ENCODE measurements at regions of chr7 and their contacts with region 1.

Region 1: GRCh38 chr7:148914208-148914777 is 30.2 kb upstream of the EZH2 start:
- DNase-seq: peak; percentile 81
- H3K4me3 Mint-ChIP-seq: peak overlapping the region; percentile 84
- H3K27ac Mint-ChIP-seq: peak overlapping the region; percentile 98
- H3K4me1 Mint-ChIP-seq: peaks cover 62% of the 10 kb centered on the region
- H3K27me3 Mint-ChIP-seq: peaks cover 1% of the 10 kb centered on the region

Region 2: DNA sequence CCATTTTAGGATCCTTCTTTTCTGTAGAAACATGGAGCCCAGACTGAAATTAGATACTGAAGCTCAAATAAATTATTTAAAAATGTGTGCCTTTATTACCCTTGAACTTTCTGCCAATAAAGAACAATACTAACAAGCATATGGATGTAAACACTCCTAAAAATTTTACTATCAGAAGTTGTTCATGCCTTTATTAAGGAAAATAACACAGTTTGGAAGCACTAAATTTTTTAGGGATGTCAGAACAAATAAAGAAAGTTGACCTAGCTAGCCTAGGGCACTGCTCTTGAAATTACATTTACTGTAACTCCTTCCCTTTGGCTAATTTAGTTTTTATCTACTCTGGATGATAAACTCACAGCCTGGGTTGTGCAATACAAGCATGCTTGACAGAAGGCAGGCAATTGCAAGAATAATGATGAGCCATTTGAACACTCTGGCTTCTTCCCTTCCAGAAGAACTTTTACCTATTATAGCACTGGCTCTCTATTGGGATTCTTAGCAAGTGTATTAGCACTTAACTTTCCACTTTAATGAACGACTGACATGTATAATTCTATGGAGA is 675.5 kb before region 1 on chr7:
- intact Hi-C with region 1: no loop called
- DNase-seq: no peak
- H3K4me3 Mint-ChIP-seq: no peak overlapping the region
- H3K27ac Mint-ChIP-seq: no peak overlapping the region
- H3K4me1 Mint-ChIP-seq: no peaks in the 10 kb centered on the region
- H3K27me3 Mint-ChIP-seq: peaks cover 20% of the 10 kb centered on the region

Region 3: GRCh38 chr7:148800677-148801076 is 113.6 kb before region 1 on chr7:
- intact Hi-C with region 1: no loop called
- DNase-seq: peak; percentile 48
- H3K4me3 Mint-ChIP-seq: no peak overlapping the region
- H3K27ac Mint-ChIP-seq: peak overlapping the region; percentile 1
- H3K4me1 Mint-ChIP-seq: no peaks in the 10 kb centered on the region
- H3K27me3 Mint-ChIP-seq: no peaks in the 10 kb centered on the region

Region 4: GRCh38 chr7:148856891-148857290 is 57.4 kb before region 1 on chr7:
- intact Hi-C with region 1: loop called (anchors 1 kb)
- DNase-seq: no peak
- H3K4me3 Mint-ChIP-seq: peak overlapping the region; percentile 32
- H3K27ac Mint-ChIP-seq: peak overlapping the region; percentile 79
- H3K4me1 Mint-ChIP-seq: peaks cover 40% of the 10 kb centered on the region
- H3K27me3 Mint-ChIP-seq: no peaks in the 10 kb centered on the region

Region 5: GRCh38 chr7:148898845-148899484 is 15.3 kb before region 1 on chr7:
- intact Hi-C with region 1: loop called (anchors 2 kb)
- DNase-seq: peak; percentile 46
- H3K4me3 Mint-ChIP-seq: no peak overlapping the region
- H3K27ac Mint-ChIP-seq: peak overlapping the region; percentile 70
- H3K4me1 Mint-ChIP-seq: peaks cover 16% of the 10 kb centered on the region
- H3K27me3 Mint-ChIP-seq: no peaks in the 10 kb centered on the region

Region 6: DNA sequence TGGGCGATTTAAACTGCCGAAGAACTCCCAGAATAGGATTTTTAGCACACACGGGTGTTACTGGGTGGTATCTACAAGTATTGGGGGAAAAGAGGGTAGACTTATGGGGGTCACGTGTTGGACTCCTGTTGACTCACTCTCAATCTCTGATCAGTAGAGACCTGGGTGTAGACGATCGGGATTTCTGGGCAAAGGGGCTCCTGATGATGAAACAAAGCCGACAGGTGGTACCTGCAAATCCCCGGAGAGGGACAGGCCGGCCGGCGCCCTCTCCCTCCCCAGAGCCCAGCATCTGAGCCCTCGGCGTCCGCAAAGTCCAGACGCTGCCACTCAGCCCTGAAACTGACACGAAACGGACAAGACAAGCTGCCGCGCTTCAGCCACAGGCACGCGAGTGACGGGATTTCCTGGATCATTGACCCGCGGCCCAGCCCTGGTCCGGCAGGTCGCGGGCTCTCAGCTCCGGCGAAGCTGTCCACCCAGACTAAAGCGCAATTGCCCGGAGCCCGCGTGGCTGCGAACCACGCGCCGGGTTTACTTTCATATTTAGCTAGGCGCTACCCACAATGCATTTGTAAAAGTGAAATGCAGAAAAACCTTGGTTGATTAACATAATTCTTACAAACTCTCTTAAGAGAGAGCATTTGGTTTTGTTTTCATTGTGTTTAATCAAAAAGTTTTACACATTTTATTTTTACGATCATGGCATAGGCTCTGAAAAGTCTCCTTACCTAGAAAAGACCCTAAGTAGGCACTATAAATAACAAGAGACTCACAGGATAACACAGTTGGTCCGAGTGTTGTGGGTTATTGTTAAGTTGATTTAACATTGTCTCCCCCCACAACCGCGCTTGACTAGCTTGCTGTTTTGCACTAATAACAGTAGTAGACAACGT is 26.7 kb after region 1 on chr7:
- intact Hi-C with region 1: loop called (anchors 1 kb)
- DNase-seq: peak; percentile 92
- H3K4me3 Mint-ChIP-seq: peak overlapping the region; percentile 97
- H3K27ac Mint-ChIP-seq: peak overlapping the region; percentile 99
- H3K4me1 Mint-ChIP-seq: peaks cover 17% of the 10 kb centered on the region
- H3K27me3 Mint-ChIP-seq: no peaks in the 10 kb centered on the region

Region 7: DNA sequence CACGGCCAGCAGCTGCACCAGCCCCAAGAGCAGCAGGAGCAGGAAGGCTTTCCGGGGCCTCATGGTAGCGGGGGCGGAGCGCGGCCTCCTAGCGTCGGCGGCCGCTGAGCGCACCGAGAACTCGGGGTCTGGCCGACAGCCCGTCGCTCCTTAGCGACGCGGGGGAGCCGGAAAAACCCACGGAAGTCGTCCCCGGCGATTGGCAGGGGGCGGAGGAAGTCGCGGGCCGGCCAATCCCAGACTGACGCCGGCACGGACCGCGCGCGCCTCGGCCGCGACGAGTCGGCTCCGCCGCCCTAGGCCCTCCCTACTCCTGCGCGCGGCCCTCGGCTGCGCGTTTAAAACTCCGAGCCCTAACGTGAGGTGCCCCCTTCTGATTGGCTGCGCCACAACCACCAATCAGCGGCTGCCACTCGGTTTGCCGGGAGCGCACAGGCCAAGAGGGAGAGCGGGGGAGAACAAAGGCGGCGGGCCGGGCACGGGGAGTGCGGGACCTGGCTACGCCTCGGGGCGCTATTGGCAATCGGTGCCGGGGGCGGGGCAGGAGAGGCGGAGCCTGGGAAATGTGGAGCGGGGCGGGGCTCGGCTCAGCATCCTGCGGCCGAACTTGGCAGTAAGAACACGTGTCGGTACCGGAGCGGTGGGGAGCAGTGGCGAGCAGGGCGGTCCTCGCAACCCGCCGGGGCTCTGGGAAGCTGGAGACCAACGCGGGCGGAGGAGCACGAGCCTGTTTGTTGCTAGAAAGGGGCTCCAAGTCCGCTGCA is 114.2 kb after region 1 on chr7 and contains the start of gene PDIA4:
- intact Hi-C with region 1: loop called (anchors 1 kb)
- DNase-seq: peak; percentile 100
- H3K4me3 Mint-ChIP-seq: peak within 1 kb of the TSS; percentile 99
- H3K27ac Mint-ChIP-seq: peak within 1 kb of the TSS; percentile 95
- H3K4me1 Mint-ChIP-seq: peaks cover 33% of the 10 kb centered on the region
- H3K27me3 Mint-ChIP-seq: peaks cover 6% of the 10 kb centered on the region
- total RNA-seq, gene PDIA4: 137 and 138 TPM in 2 replicates

Measured in activated CD4-positive, alpha-beta T cell treated with anti-CD3 and anti-CD28 coated beads, Interleukin-2, amount 10 ng/mL, durations not matched to agents 24 days and 14 days (primary cell).